Activated naive CD4-positive, alpha-beta T cell treated with anti-CD3 and anti-CD28 coated beads for 36 hours (primary cell): ENCODE measurements at regions of chr5 and their contacts with region 1.

Region 1: DNA sequence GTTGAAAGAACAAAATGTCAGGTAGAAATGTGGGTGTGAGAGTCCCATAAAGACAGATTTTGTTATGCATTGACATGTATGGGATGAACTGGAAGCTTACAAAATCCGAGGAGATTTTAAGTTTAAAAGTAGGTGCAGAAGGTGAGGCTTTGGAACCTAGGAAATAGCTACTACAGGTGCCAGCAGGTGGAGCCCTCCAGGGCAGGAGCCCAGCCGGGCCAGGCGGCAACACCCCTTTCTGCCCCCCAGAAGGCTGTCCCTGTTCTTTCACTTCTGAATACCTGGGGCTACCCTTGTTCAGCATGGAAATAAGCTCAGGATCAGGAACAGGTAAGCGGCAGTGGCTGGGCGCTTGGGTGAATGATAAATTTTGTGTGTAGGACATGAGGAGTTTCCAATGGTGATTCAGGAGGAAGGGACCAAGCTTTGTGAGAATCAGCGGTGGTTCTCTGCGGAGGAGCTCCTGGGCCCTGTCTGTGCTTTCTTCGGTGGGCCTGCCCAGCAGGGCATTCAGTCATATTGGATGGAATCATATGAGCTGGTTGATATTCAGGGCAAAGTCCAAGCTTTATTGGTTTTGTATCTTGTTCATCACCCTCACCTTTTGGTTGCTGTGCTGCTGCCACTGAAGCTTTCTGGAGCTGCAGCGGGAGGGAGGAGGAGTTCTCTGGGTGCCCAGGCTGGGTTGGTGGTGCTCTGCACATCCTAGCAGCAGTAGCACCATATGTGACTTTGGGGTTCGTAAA is 12.3 kb downstream of the PCBD2 start:
- DNase-seq: no peak
- H3K4me3 Mint-ChIP-seq: no peak overlapping the region
- H3K27ac Mint-ChIP-seq: no peak overlapping the region
- H3K4me1 Mint-ChIP-seq: peaks cover 12% of the 10 kb centered on the region
- H3K27me3 Mint-ChIP-seq: no peaks in the 10 kb centered on the region

Region 2: DNA sequence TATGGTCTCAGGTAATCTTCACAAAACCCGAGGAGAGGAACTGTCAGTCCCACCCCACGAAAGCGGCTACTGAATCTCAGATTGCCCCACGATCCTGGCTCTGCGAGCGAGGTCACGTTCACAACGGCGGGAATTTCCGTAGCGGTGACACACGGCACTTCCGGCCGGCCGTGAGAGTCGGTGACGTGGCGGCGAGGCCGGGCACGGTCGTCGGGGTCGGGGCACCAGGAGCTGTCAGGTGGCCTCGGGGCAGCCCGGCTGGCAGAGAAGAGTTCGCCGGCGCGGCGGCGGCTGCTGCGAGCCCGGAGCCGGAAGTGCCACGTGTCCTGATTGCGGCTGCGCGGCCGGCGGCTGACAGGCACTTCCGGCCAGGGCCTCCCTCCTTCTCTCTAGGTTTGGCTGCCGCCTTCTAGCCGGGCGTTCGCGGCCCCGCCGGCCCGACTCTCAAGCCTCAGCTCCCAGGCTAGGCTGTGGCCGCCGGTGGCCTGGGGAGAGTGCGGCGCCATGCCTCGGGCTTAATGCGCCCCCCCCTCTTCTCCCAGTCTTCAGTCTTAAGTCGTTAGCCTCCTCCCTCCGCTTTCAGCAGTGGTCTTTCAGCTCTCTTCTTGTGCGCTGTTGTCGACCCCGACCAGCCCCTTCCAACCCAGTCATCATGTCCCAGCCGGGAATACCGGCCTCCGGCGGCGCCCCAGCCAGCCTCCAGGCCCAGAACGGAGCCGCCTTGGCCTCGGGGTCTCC is 268.6 kb before region 1 on chr5 and contains the start of gene SEC24A:
- CTCF ChIA-PET with region 1: no interaction called
- intact Hi-C with region 1: no loop called
- DNase-seq: peak; percentile 92
- H3K4me3 Mint-ChIP-seq: peak within 1 kb of the TSS; percentile 89
- H3K27ac Mint-ChIP-seq: peak within 1 kb of the TSS; percentile 100
- H3K4me1 Mint-ChIP-seq: peaks cover 35% of the 10 kb centered on the region
- H3K27me3 Mint-ChIP-seq: no peaks in the 10 kb centered on the region
- total RNA-seq, gene SEC24A: 16.6 to 18.5 TPM

Region 3: GRCh38 chr5:134964359-134965270 is 47.4 kb after region 1 on chr5:
- CTCF ChIA-PET with region 1: interaction called, 8 read pairs
- intact Hi-C with region 1: loop called (anchors 1 kb)
- DNase-seq: peak; percentile 39
- H3K4me3 Mint-ChIP-seq: no peak overlapping the region
- H3K27ac Mint-ChIP-seq: peak overlapping the region; percentile 62
- H3K4me1 Mint-ChIP-seq: peaks cover 27% of the 10 kb centered on the region
- H3K27me3 Mint-ChIP-seq: no peaks in the 10 kb centered on the region

Region 4: GRCh38 chr5:135034236-135034962 is 117.2 kb after region 1 on chr5:
- CTCF ChIA-PET with region 1: no interaction called
- intact Hi-C with region 1: loop called (anchors 5 kb)
- DNase-seq: peak; percentile 66
- H3K4me3 Mint-ChIP-seq: peak overlapping the region; percentile 77
- H3K27ac Mint-ChIP-seq: no peak overlapping the region
- H3K4me1 Mint-ChIP-seq: peaks cover 35% of the 10 kb centered on the region
- H3K27me3 Mint-ChIP-seq: peaks cover 76% of the 10 kb centered on the region

Region 5: GRCh38 chr5:135191084-135191826 is 274.0 kb after region 1 on chr5:
- CTCF ChIA-PET with region 1: interaction called, 4 read pairs
- intact Hi-C with region 1: loop called (anchors 1 kb)
- DNase-seq: peak; percentile 84
- H3K4me3 Mint-ChIP-seq: peak overlapping the region; percentile 70
- H3K27ac Mint-ChIP-seq: no peak overlapping the region
- H3K4me1 Mint-ChIP-seq: peaks cover 2% of the 10 kb centered on the region
- H3K27me3 Mint-ChIP-seq: peaks cover 5% of the 10 kb centered on the region

Region 6: GRCh38 chr5:135660826-135661575 is 743.8 kb after region 1 on chr5:
- CTCF ChIA-PET with region 1: no interaction called
- intact Hi-C with region 1: no loop called
- DNase-seq: no peak
- H3K4me3 Mint-ChIP-seq: no peak overlapping the region
- H3K27ac Mint-ChIP-seq: no peak overlapping the region
- H3K4me1 Mint-ChIP-seq: no peaks in the 10 kb centered on the region
- H3K27me3 Mint-ChIP-seq: peaks cover 2% of the 10 kb centered on the region